ENCODE measurements at regions of chr9 and their contacts with region 1.

Region 1: GRCh38 chr9:33065157-33066076 is 11.1 kb downstream of the SMU1 start:
- DNase-seq: no peak
- ATAC-seq: no peak
- H3K4me3 ChIP-seq: no peak overlapping the region
- H3K4me3 Mint-ChIP-seq: no peak overlapping the region
- H3K27ac ChIP-seq: no peak overlapping the region
- H3K27ac Mint-ChIP-seq: peak overlapping the region in 1 of 2 donors; percentile 17
- H3K4me1 ChIP-seq: no peaks in the 10 kb centered on the region
- H3K4me1 Mint-ChIP-seq: peaks cover 7 to 16% (median 13%) of the 10 kb centered on the region in 3 donors
- H3K27me3 ChIP-seq: no peaks in the 10 kb centered on the region
- H3K27me3 Mint-ChIP-seq: no peaks in the 10 kb centered on the region

Region 2: DNA sequence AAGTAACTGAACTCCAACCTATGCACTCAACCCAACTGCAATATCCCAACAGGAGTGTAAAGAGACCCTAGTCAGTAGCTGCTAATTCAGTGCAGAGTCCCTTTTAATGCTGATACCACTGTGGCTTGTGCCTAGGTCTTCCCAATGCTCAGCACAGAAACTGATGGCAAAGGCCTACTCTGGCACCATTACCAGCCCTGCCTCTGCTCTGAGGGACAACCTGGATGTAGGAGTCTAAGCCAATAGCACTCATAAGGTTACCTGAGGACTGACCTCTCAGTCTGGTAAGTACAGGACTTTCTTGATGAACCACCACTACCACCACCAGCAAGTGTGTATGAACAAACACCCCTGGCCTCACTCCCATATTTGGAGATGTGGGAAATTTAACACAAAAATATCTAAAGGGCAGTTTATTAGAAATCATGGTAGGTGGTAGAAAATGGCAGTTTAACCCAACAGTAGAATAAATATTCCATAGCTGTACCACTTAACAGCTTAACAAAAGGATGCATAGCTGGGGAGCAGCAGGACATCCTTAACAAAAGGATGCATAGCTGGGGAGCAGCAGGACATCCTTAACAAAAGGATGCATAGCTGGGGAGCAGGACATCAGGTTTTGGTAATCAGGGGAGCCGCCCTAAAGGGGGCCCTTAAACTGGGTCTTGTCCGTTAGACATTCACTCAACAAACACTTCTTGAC is 51.3 kb before region 1 on chr9:
- CTCF ChIA-PET with region 1: no interaction called
- POLR2A ChIA-PET with region 1: interaction called in 1 of 2 experiments, 20 read pairs
- DNase-seq: no peak
- ATAC-seq: no peak
- H3K4me3 ChIP-seq: no peak overlapping the region
- H3K4me3 Mint-ChIP-seq: no peak overlapping the region
- H3K27ac ChIP-seq: no peak overlapping the region
- H3K27ac Mint-ChIP-seq: no peak overlapping the region
- H3K4me1 ChIP-seq: no peaks in the 10 kb centered on the region
- H3K4me1 Mint-ChIP-seq: no peaks in the 10 kb centered on the region
- H3K27me3 ChIP-seq: no peaks in the 10 kb centered on the region
- H3K27me3 Mint-ChIP-seq: no peaks in the 10 kb centered on the region

Region 3: DNA sequence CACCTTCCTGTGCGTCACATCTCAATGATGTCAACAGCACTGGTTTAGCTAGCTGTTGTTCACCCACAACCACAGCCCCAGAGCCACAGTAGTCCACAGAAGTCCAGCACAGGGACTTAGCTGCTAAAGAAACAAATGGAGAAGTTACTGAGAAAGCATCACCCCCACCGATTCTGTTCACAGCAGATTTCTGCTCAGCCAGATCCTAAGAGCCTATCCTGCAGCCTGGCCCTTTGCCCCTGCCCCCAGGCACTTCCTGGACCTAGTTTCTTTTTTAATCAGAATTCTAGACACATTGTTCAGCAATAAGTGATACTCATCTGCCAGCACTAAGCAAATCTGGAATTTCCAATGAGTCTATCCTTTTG is 94.3 kb after region 1 on chr9:
- CTCF ChIA-PET with region 1: no interaction called
- POLR2A ChIA-PET with region 1: interaction called in 1 of 2 experiments, 15 read pairs
- DNase-seq: peak in 34 of 35 experiments; percentile 27 to 83 (median 68)
- ATAC-seq: peak; percentile 44 to 77 (median 49)
- H3K4me3 ChIP-seq: peak overlapping the region; percentile 28 to 42
- H3K4me3 Mint-ChIP-seq: peak overlapping the region; percentile 63 to 96 (median 76)
- H3K27ac ChIP-seq: peak overlapping the region; percentile 97
- H3K27ac Mint-ChIP-seq: peak overlapping the region; percentile 94 to 96
- H3K4me1 ChIP-seq: peaks cover 61 to 88% of the 10 kb centered on the region in 2 experiments
- H3K4me1 Mint-ChIP-seq: peaks cover 92 to 97% (median 93%) of the 10 kb centered on the region in 3 donors
- H3K27me3 ChIP-seq: no peaks in the 10 kb centered on the region
- H3K27me3 Mint-ChIP-seq: no peaks in the 10 kb centered on the region